Sciatic nerve (tissue), 2 donors: ENCODE measurements at regions of chr2 and their contacts with region 1.

Region 1: DNA sequence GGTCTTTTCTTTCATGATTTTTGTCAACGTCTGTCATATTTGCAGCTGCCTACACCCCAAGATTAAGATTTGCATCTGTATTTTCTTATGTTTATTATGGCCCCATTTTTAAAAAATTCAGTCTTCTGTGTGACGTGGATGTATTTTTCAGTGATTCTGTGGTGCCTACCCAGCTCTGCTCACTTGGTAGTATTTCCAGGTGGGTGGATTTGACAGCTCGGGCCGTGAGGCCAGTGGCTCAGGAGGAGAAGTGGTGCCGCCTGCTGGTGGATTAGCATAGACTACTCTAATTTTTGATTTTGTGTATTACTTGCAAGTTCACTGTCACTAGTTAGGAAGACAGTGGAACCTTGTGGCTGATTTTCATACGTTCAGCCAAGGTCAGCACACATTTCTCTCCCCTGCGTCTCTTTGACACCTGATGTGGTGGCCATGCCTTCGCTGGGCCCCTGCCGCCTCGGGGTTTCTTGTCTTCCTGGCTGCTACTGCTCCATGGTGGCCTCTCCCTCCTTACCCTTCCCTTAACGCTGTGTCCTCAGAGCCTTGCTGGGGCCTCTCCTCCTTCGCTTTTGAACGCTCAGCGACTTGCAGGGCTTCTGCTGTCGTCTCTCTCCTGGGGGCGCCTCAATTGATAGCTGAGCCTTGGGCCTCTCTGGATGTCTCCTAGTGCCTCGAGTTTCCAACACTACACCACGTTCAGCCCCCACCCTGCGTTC is 89.3 kb downstream of the DGKD start:
- DNase-seq: peak; percentile 89
- ATAC-seq: peak; percentile 71

Region 2: DNA sequence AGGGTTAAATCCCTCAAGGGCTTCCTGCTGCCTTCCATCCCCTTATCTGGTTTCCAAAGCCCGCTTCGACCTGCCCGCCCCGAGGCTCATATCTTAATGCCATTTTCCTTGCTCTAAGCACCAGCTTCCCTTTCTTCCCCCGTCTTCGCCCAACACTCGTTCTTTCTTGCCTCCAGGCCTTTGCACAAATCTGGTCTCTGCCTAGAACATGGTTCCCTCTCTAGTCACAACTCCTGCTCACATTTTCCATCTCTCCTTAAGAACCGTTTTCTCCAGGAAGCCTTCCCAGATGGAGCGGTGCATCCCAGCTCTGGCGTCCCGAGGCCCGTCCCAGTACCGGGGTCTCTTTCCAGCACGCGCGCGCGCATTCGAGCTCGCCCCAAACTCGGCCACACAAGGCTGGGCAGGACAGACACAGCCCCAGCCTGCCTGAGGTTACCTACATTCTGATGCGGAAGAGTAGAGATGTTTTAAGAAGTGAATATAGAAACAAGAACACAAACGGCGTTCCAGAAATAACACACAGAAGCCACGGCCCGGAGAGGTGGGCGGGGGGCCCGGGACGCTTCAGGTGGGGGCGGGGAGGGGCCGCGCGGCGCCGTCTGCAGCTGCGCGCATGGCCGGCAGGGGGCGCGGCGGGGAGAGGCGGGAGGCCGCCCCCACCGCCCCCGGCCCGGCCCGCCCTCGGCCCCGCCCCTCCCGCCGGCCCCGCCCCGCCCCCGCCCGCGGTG is 89.7 kb before region 1 on chr2 and contains the start of gene DGKD:
- intact Hi-C with region 1: loop called (anchors 10 kb)
- DNase-seq: peak; percentile 74
- ATAC-seq: peak; percentile 75
- total RNA-seq, gene DGKD: 35.8 TPM

Region 3: GRCh38 chr2:233489666-233490065 is 46.0 kb after region 1 on chr2:
- intact Hi-C with region 1: no loop called
- DNase-seq: no peak
- ATAC-seq: peak; percentile 79